K562 (cell line): ENCODE measurements at regions of chr2 and their contacts with region 1.

Region 1: DNA sequence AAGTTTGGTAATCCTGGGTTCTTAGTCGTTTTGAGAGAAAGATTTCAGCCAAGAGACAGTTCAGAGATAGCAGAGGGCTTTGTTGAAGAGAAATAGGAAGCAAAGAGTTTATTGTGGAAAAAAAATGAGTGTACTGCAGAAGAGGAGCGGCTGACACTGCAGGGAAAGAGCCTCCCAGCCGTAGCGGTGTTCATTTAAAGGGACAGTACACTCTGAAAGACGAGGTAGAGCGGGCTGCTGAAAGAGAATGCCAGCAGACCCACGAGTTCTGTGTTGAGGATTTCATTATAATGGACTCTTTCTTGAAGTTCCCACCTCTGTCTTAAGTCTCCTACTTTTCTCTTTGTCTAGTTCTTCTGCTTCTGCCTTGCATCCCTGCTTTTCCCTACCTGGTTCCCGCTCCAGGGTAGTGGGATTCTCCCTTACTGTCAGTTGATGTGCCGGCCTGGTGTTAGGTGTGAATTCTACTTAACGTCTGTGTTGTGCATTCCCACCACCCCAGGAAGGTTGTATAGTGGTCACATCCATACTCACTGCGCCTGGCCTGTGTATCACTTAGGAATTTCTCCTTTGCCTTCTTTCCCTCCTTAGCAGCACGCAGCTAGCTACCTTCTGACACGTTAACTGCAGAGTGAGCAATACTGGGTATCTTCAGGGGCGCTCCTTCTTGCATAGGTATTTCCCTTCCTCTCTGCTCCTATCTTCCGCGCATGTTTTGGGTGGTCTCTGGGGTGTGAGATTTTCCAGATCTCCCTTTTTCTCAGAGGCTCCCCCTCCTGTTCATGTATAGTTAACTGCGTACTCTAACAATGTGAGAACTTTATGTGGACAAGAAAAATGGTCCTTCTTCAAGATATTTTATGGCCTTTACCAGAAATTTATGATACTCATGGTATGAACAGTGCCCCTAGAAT is 164.5 kb downstream of the PTH2R start:
- DNase-seq: peak; percentile 15 to 57 (median 28)
- ATAC-seq: peak; percentile 83
- H3K4me3 ChIP-seq: peak overlapping the region; percentile 10; the same call in 1 of the 2 replicates
- H3K27ac ChIP-seq: peak overlapping the region; percentile 76
- H3K4me1 ChIP-seq: peaks cover 17 to 36% of the 10 kb centered on the region in 2 experiments
- H3K27me3 ChIP-seq: no peaks in the 10 kb centered on the region
- CTCF ChIP-seq: peak; percentile 8 to 43 (median 22); a peak in 4 of 6 replicates
- EP300 ChIP-seq: no peak
- POLR2A ChIP-seq: no peak
- RAD21 ChIP-seq: peak in 1 of 2 experiments; percentile 1; a peak in 1 of 4 replicates

Region 2: DNA sequence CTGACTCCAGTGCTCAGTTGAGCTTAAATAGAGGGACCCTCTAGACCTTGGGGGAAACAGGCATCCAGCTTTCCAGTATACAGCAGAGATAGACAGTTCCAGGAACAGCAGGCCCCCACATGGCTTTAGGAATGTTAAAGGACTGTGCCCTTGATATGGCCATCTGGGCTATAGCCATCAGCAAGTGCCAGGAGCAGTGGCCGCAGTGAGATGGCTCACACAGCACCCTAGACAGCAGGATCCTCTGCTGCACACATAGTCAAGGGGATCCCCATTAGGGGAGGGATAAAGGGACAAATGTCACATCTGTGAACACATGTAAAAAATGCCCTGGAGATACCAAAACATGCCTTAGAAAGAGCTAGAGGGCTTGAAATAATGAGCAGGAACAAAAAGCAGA is 48.9 kb after region 1 on chr2:
- CTCF ChIA-PET with region 1: no interaction called
- POLR2A ChIA-PET with region 1: no interaction called
- in situ Hi-C with region 1: no loop called
- intact Hi-C with region 1: loop called (anchors 2 kb)
- DNase-seq: peak in 1 of 4 experiments; percentile 36
- ATAC-seq: peak; percentile 67
- H3K4me3 ChIP-seq: no peak overlapping the region
- H3K27ac ChIP-seq: peak overlapping the region; percentile 46; the same call in 2 of the 3 replicates
- H3K4me1 ChIP-seq: peaks cover 6 to 17% of the 10 kb centered on the region in 2 experiments; a peak in 4 of 5 replicates
- H3K27me3 ChIP-seq: no peaks in the 10 kb centered on the region
- CTCF ChIP-seq: no peak
- EP300 ChIP-seq: no peak
- POLR2A ChIP-seq: no peak
- RAD21 ChIP-seq: no peak

Region 3: DNA sequence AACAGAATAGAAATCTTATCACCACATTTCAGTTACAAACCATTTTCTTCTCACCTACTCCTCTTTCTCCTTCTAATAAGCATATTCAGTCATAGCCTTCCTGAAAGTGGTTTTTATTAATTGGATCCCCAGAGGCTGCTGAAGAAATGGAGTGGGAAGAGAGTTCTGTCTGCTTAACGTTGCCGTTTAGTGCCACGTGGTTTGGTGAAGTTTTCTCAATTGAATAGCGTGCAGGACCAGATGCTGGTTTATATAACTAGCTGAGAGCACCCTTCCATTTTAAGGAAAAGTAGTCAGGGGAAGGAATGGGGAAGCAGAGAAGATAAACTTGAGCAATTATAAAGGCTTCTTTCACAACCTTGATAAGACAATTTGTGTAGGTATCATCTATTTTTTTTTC is 154.2 kb after region 1 on chr2:
- CTCF ChIA-PET with region 1: no interaction called
- POLR2A ChIA-PET with region 1: no interaction called
- in situ Hi-C with region 1: no loop called
- intact Hi-C with region 1: no loop called
- DNase-seq: no peak
- ATAC-seq: no peak
- H3K4me3 ChIP-seq: no peak overlapping the region
- H3K27ac ChIP-seq: no peak overlapping the region
- H3K4me1 ChIP-seq: no peaks in the 10 kb centered on the region
- H3K27me3 ChIP-seq: no peaks in the 10 kb centered on the region
- CTCF ChIP-seq: no peak
- EP300 ChIP-seq: no peak
- POLR2A ChIP-seq: no peak
- RAD21 ChIP-seq: no peak